HepG2 (cell line): ENCODE measurements at regions of chr3 and their contacts with region 1.

Region 1: DNA sequence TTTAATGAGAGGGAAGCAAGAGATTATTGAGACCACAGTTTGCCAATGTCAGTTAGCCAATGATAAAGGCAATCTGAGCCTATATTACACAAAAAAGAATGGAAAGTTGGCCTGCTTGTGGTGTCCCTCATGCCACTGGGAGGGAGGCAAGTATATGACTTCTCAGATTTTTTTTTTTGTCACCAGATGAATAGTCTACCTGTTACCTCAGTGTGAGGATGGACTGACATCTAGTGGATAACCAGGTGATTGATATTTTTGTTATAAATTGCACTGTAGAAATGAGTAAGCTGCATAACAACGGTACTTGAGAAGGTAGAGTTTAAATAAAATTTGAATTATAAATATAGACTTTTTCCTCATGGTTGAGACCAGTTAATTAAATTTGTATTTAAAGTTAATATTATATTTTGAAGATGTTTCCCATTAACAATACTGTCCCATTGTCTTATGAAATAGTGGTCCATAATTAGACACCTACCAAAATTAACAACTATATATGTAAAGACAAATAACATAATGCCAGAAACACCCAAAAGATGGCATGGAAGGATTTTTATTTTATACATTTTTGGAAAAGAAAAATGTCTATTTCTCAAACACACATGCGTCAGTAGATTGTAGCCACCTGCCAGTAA is 237.8 kb upstream of the GADL1 start:
- DNase-seq: peak; percentile 39
- ATAC-seq: peak; percentile 75
- H3K4me3 ChIP-seq: no peak overlapping the region
- H3K27ac ChIP-seq: no peak overlapping the region
- H3K4me1 ChIP-seq: no peaks in the 10 kb centered on the region
- H3K27me3 ChIP-seq: no peaks in the 10 kb centered on the region
- CTCF ChIP-seq: peak; percentile 65
- EP300 ChIP-seq: no peak
- POLR2A ChIP-seq: no peak
- RAD21 ChIP-seq: peak; percentile 59; the same call in 1 of the 2 replicates

Region 2: GRCh38 chr3:30012941-30013543 is 1119.2 kb before region 1 on chr3:
- CTCF ChIA-PET with region 1: interaction called, 5 read pairs
- POLR2A ChIA-PET with region 1: no interaction called
- in situ Hi-C with region 1: loop called (anchors 25 kb)
- intact Hi-C with region 1: loop called (anchors 1 kb)
- DNase-seq: peak; percentile 63
- ATAC-seq: peak; percentile 88
- H3K4me3 ChIP-seq: no peak overlapping the region
- H3K27ac ChIP-seq: no peak overlapping the region
- H3K4me1 ChIP-seq: no peaks in the 10 kb centered on the region
- H3K27me3 ChIP-seq: no peaks in the 10 kb centered on the region
- CTCF ChIP-seq: peak; percentile 77
- EP300 ChIP-seq: no peak
- POLR2A ChIP-seq: no peak
- RAD21 ChIP-seq: peak; percentile 58

Region 3: GRCh38 chr3:30768703-30769685 is 363.3 kb before region 1 on chr3:
- CTCF ChIA-PET with region 1: interaction called, 17 read pairs
- POLR2A ChIA-PET with region 1: no interaction called
- in situ Hi-C with region 1: loop called (anchors 5 kb)
- intact Hi-C with region 1: loop called (anchors 1 kb)
- DNase-seq: peak; percentile 45
- ATAC-seq: peak; percentile 68
- H3K4me3 ChIP-seq: no peak overlapping the region
- H3K27ac ChIP-seq: no peak overlapping the region
- H3K4me1 ChIP-seq: peaks cover 11% of the 10 kb centered on the region
- H3K27me3 ChIP-seq: peaks cover 2 to 9% of the 10 kb centered on the region in 2 experiments; a peak in 1 of 5 replicates
- CTCF ChIP-seq: peak; percentile 82
- EP300 ChIP-seq: no peak
- POLR2A ChIP-seq: no peak
- RAD21 ChIP-seq: peak; percentile 44; the same call in 1 of the 2 replicates

Region 4: DNA sequence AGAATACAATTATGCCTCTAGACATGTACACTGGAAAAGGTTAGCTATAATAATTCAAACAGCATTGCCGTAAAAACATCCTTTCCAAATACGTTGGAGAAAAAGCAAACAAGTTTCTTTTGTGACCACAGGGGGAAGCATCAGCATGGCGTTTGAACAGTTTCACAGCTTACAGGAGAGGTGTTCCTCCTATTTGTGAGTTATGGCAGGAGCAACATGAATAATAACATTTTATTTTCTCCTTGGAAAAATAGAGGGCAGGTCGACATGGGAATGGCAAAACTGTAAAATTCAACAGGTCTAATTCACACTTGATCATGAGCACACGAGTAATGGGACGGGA is 198.1 kb before region 1 on chr3:
- CTCF ChIA-PET with region 1: no interaction called
- POLR2A ChIA-PET with region 1: no interaction called
- in situ Hi-C with region 1: no loop called
- intact Hi-C with region 1: loop called (anchors 5 kb)
- DNase-seq: peak; percentile 16
- ATAC-seq: peak; percentile 76
- H3K4me3 ChIP-seq: no peak overlapping the region
- H3K27ac ChIP-seq: no peak overlapping the region
- H3K4me1 ChIP-seq: no peaks in the 10 kb centered on the region
- H3K27me3 ChIP-seq: no peaks in the 10 kb centered on the region
- CTCF ChIP-seq: peak; percentile 60
- EP300 ChIP-seq: no peak
- POLR2A ChIP-seq: no peak
- RAD21 ChIP-seq: no peak

Region 5: DNA sequence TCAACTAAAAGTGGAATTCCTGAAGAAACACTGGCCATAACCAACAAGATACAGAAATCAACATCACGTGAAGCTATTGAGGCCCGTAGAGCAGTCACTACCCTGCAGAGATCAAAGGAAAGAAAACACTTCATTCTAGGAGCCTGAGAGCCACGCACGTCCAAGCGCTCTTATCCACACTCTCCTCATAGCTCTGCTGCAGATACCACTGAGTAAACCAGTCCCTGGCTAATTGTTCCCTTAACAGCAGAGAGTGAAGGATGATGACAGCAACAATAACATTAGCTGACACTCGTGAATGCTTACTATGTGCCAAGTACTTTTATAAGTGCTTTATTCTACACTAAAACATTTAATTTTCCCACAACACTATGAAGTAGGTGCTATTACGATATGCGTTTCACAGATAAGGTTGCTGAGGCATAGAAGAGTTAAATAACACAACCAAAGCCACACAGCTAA is 33.2 kb after region 1 on chr3:
- CTCF ChIA-PET with region 1: no interaction called
- POLR2A ChIA-PET with region 1: no interaction called
- in situ Hi-C with region 1: no loop called
- intact Hi-C with region 1: no loop called
- DNase-seq: no peak
- ATAC-seq: peak; percentile 50; the same call in 2 of the 3 replicates
- H3K4me3 ChIP-seq: 0 out of 6 replicates have a peak overlapping the region, but pooled peaks of 1 of the 3 experiments have one; percentile 6
- H3K27ac ChIP-seq: no peak overlapping the region
- H3K4me1 ChIP-seq: peaks cover 16% of the 10 kb centered on the region
- H3K27me3 ChIP-seq: no peaks in the 10 kb centered on the region; a peak in 1 of 5 replicates
- CTCF ChIP-seq: no peak
- EP300 ChIP-seq: no peak
- POLR2A ChIP-seq: no peak
- RAD21 ChIP-seq: no peak